H1 (cell line): ENCODE measurements at regions of chr16 and their contacts with region 1.

Region 1: DNA sequence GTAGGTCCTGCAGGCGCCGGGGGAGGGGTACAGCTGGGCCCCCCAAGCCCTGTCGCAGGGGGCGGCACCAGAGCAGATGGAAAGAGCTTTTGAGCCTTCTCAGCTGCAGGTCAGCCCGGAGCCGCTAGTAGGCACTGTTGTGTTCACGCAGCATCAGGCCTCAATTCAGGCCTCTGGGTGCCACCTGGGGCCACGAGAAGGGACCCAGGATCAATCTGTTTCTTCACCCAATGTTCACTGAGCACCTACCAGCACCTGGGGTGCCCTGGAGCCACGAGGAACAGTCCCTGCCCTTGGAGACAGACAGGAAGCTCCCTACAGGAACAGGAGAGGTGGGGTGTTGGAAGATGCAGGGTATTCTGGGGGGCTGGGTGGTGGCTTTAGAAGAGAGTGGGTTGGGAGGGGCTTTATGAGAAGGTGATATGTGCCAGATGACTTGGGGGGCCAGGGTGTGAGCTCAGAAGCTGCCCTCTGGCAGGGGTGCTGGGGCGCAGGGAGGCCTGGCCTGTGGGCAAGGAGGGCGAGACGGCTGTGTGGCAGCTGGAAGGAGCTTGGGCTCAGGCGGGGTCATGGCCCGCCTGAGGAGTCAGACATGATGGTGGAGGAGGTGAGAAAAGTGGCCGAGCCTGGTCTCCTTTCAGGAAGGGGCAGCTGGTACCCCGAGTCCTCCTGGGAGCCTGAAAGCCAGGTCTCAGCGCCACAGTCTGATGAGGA is 121.9 kb upstream of the GSE1 start:
- DNase-seq: peak in 1 of 2 experiments; percentile 89
- H3K4me3 ChIP-seq: no peak overlapping the region
- H3K27ac ChIP-seq: no peak overlapping the region
- H3K4me1 ChIP-seq: peaks cover 3 to 19% (median 14%) of the 10 kb centered on the region in 4 experiments; a peak in 6 of 7 replicates
- H3K27me3 ChIP-seq: no peaks in the 10 kb centered on the region
- CTCF ChIP-seq: peak; percentile 89 to 96 (median 95)
- EP300 ChIP-seq: no peak
- POLR2A ChIP-seq: no peak
- RAD21 ChIP-seq: peak; percentile 66 to 76

Region 2: GRCh38 chr16:85372627-85373372 is 118.4 kb before region 1 on chr16:
- CTCF ChIA-PET with region 1: no interaction called
- POLR2A ChIA-PET with region 1: no interaction called
- DNase-seq: no peak
- H3K4me3 ChIP-seq: no peak overlapping the region
- H3K27ac ChIP-seq: no peak overlapping the region
- H3K4me1 ChIP-seq: peaks cover 0 to 5% (median 2%) of the 10 kb centered on the region in 4 experiments; a peak in 5 of 7 replicates
- H3K27me3 ChIP-seq: peaks cover 0 to 1% (median 0%) of the 10 kb centered on the region in 4 experiments; a peak in 2 of 7 replicates
- CTCF ChIP-seq: no peak
- EP300 ChIP-seq: no peak
- POLR2A ChIP-seq: no peak
- RAD21 ChIP-seq: no peak

Region 3: DNA sequence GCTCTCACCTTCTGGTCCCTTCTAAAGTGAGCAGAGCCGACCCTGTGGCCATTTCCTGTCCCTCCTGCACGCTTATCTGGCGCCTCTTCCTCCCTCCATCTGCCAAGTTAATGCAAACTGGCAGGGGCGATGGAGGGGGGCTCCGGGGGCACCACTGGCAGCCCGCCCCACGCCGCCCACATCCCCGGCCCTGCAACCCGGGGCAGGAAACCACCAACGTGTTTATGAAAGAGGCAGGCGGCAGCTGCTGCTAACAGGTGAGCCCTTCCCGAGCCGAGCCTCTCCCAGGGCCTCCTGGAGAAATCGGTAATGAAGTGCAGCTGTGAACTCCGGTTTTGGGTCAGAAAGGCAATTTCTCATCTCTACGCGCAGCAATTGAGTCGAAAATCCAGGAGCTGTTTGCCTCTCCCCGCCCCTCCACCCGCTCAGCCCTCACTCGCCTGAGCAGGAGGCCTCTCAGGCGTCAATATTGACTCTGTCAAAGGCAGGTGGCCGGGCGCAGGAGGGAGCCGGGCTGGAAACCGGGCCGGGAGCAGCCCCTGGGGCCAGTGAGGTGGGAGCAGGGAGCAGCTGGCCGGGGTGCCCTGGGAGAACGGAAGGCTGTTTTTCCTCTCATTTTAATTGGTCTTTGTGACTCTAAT is 42.5 kb before region 1 on chr16:
- CTCF ChIA-PET with region 1: interaction called, 43 read pairs
- POLR2A ChIA-PET with region 1: interaction called, 3 read pairs
- DNase-seq: no peak
- H3K4me3 ChIP-seq: no peak overlapping the region
- H3K27ac ChIP-seq: no peak overlapping the region
- H3K4me1 ChIP-seq: peaks cover 0 to 23% (median 16%) of the 10 kb centered on the region in 4 experiments; a peak in 6 of 7 replicates
- H3K27me3 ChIP-seq: no peaks in the 10 kb centered on the region
- CTCF ChIP-seq: no peak
- EP300 ChIP-seq: no peak
- POLR2A ChIP-seq: no peak
- RAD21 ChIP-seq: no peak

Region 4: GRCh38 chr16:85479972-85480751 is 11.1 kb before region 1 on chr16:
- CTCF ChIA-PET with region 1: interaction called, 277 read pairs
- POLR2A ChIA-PET with region 1: interaction called, 3 read pairs
- DNase-seq: peak in 1 of 2 experiments; percentile 73
- H3K4me3 ChIP-seq: no peak overlapping the region
- H3K27ac ChIP-seq: no peak overlapping the region
- H3K4me1 ChIP-seq: peaks cover 0 to 6% (median 1%) of the 10 kb centered on the region in 4 experiments; a peak in 4 of 7 replicates
- H3K27me3 ChIP-seq: no peaks in the 10 kb centered on the region
- CTCF ChIP-seq: peak; percentile 27 to 59 (median 37)
- EP300 ChIP-seq: no peak
- POLR2A ChIP-seq: no peak
- RAD21 ChIP-seq: peak; percentile 18 to 40; a peak in 2 of 4 replicates

Region 5: DNA sequence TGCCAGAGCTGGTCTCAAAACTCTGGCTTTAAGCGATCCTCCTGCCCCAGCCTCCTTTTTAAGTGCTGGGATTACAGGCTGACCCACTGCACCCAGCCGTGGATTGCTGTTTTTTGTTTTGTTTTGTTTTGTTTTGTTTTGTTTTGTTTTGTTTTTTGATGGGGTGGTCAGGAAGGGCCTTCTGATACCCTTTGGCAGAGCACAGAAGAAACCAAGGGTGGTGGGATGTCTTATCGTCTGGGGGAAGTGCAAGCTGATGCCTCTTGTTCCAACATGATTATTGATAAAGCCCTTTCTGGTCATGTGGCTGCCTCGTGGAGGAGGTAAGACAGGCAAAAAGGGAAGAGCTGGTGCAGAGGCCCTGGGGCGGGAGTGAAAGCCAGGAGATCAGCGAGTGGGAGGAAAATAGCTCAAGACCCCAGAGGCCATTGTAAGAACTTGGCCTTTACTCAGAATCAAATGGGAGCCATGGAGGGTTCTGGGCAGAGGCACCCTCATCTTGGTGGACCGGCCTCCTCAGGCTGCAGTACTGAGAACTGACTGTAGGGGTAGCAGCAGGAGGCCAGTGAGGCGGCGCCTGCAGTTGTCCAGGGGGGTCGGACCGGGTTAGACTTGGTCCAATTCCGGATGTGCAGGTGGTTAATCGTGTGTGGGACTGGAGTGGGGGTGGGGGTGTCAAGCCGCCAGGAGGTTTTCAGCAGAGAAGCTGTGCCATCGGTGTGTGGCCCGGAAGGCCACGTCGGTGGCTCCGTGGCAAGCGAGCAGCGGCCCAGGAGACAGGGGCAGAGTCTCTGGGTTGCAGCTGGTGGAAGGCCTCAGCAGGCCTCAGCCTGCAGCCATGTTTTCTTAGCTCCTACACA is 37.5 kb after region 1 on chr16:
- CTCF ChIA-PET with region 1: interaction called, 99 read pairs
- POLR2A ChIA-PET with region 1: interaction called, 3 read pairs
- DNase-seq: no peak
- H3K4me3 ChIP-seq: no peak overlapping the region
- H3K27ac ChIP-seq: no peak overlapping the region
- H3K4me1 ChIP-seq: peaks cover 3 to 24% (median 13%) of the 10 kb centered on the region in 4 experiments
- H3K27me3 ChIP-seq: no peaks in the 10 kb centered on the region
- CTCF ChIP-seq: peak; percentile 37 to 57 (median 47)
- EP300 ChIP-seq: no peak
- POLR2A ChIP-seq: no peak
- RAD21 ChIP-seq: no peak; a peak in 1 of 4 replicates

Region 6: GRCh38 chr16:85554112-85554813 is 63.0 kb after region 1 on chr16:
- CTCF ChIA-PET with region 1: interaction called, 19 read pairs
- POLR2A ChIA-PET with region 1: interaction called, 3 read pairs
- DNase-seq: no peak
- H3K4me3 ChIP-seq: peak overlapping the region; percentile 54 to 98 (median 61)
- H3K27ac ChIP-seq: no peak overlapping the region
- H3K4me1 ChIP-seq: peaks cover 0 to 27% (median 21%) of the 10 kb centered on the region in 4 experiments; a peak in 6 of 7 replicates
- H3K27me3 ChIP-seq: no peaks in the 10 kb centered on the region; a peak in 2 of 7 replicates
- CTCF ChIP-seq: no peak
- EP300 ChIP-seq: no peak
- POLR2A ChIP-seq: no peak
- RAD21 ChIP-seq: no peak

Region 7: GRCh38 chr16:85610508-85611332 is 119.5 kb after region 1 on chr16:
- CTCF ChIA-PET with region 1: interaction called, 42 read pairs
- POLR2A ChIA-PET with region 1: no interaction called
- DNase-seq: peak; percentile 88 to 96
- H3K4me3 ChIP-seq: peak overlapping the region; percentile 29 to 92 (median 52); a peak in 6 of 8 replicates
- H3K27ac ChIP-seq: peak overlapping the region; percentile 70; the same call in 1 of the 2 replicates
- H3K4me1 ChIP-seq: peaks cover 10 to 46% (median 41%) of the 10 kb centered on the region in 4 experiments
- H3K27me3 ChIP-seq: peaks cover 0 to 9% (median 4%) of the 10 kb centered on the region in 4 experiments; a peak in 2 of 7 replicates
- CTCF ChIP-seq: peak in 2 of 3 experiments; percentile 90 to 99; a peak in 3 of 4 replicates
- EP300 ChIP-seq: peak in 1 of 2 experiments; percentile 83; a peak in 1 of 3 replicates
- POLR2A ChIP-seq: no peak
- RAD21 ChIP-seq: peak; percentile 97 to 98